Right cardiac atrium (tissue), 5 donors: ENCODE measurements at regions of chr12 and their contacts with region 1.

Region 1: DNA sequence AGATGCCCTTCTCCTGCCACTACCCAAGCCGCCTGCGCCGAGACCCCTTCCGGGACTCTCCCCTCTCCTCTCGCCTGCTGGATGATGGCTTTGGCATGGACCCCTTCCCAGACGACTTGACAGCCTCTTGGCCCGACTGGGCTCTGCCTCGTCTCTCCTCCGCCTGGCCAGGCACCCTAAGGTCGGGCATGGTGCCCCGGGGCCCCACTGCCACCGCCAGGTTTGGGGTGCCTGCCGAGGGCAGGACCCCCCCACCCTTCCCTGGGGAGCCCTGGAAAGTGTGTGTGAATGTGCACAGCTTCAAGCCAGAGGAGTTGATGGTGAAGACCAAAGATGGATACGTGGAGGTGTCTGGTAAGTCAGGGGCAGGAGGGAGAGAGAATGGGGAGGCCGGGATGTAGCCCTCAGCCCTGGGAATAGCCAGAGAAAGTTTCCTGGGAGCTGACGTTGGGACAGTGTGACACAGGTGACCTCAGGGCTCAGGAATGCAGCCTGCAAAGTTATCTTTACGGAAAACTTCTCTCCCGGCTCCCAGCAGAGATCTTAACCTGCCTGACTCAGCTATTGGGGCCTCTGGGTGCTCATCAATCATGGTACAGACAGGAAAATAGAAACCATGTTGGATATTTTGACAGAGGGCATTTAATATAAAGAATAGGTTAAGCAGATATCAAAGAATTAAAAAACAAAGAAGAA is 743 bp downstream of the HSPB8 start:
- DNase-seq: peak in 2 of 3 donors; percentile 64 to 69
- ATAC-seq: peak in 1 of 2 donors; percentile 5
- H3K4me3 ChIP-seq: peak overlapping the region; percentile 56
- H3K27ac ChIP-seq: peak overlapping the region; percentile 93
- H3K4me1 ChIP-seq: peaks cover 3% of the 10 kb centered on the region
- H3K27me3 ChIP-seq: no peaks in the 10 kb centered on the region

Region 2: GRCh38 chr12:119115296-119115905 is 64.1 kb before region 1 on chr12:
- intact Hi-C with region 1: loop called in 1 of 4 experiments (anchors 10 kb)
- DNase-seq: no peak
- ATAC-seq: peak; percentile 51 to 59
- H3K4me3 ChIP-seq: no peak overlapping the region
- H3K27ac ChIP-seq: no peak overlapping the region
- H3K4me1 ChIP-seq: no peaks in the 10 kb centered on the region
- H3K27me3 ChIP-seq: no peaks in the 10 kb centered on the region

Region 3: DNA sequence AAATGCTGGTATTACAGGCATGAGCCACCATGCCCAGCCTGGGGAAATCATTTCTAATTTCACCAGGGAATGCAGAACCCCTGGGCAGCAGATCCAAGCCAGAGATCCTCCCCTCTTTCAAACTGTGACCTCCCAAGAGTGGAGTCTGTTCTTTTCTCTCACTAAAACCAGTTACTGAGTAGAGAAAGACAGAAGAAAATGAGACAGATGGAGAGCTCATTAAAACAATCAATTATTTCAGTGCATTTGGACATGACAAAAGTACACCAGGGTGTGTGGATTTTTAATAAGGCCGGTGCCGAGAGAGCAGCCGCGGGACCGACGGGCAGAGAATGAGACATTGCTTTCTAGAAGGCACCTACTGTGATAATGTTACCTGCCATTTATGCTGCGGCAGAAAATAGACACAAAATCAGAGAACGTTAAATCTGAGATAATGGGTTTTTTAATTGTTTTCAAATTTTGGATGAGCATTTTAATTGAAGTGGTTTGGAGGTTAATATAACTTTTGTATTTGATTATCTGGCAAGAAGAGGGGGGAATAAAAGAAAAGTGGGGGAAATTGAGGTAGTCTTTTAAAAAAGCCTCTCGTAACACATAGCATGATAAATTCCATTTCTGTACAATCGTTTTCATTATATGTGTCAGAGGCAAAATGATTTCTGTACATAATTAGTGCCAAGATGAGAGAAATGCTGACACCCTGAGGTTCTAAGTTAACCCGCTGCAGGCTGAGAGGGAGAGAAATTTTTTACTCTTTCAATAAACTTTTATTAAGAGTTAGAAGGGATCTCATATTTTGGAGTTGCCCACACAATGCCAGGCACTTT is 70.1 kb after region 1 on chr12:
- intact Hi-C with region 1: no loop called
- DNase-seq: no peak
- ATAC-seq: no peak
- H3K4me3 ChIP-seq: no peak overlapping the region
- H3K27ac ChIP-seq: no peak overlapping the region
- H3K4me1 ChIP-seq: peaks cover 2% of the 10 kb centered on the region
- H3K27me3 ChIP-seq: no peaks in the 10 kb centered on the region